Ovary (tissue), 10 donors: ENCODE measurements at regions of chr3 and their contacts with region 1.

Region 1: DNA sequence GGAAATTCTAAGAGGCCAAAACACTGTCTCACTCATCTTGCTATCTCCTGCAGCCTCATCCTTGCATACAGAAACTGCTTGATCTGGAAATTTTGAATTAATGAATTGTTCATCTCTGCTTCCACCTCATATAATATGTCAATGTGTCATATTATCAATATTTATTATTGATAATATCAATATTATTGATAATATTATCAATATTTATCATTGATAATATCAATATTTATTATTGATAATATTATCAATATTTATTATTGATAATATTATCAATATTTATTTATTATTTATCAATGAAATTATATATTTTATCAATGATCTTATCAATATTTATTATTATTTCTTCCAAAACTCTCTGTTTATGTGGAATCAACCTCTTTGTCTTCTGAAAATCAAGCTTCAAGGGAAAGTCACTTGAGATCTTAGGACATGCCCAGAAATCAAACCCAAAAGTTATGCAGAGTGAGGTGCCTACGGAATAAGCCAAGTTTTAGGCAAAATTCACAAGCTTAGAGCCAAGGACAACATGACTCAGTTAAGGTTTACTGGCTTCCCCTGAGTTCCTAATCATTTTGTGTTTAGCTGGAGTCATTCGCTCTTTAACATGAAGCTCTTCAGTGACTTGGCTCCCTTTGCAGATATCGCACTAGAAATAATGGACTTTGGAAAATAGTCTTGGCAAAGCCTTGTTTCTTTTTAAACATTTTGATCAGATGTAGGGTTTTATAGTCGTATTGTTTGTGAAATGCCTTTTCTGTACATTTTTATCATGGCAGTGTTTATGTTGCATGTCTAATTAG is 297.1 kb upstream of the RARB start:
- DNase-seq: no peak
- H3K4me3 ChIP-seq: no peak overlapping the region
- H3K27ac ChIP-seq: no peak overlapping the region
- H3K4me1 ChIP-seq: no peaks in the 10 kb centered on the region
- H3K27me3 ChIP-seq: no peaks in the 10 kb centered on the region
- CTCF ChIP-seq: no peak
- EP300 ChIP-seq: no peak
- POLR2A ChIP-seq: no peak

Region 2: GRCh38 chr3:23304424-23304823 is 1826.5 kb before region 1 on chr3:
- intact Hi-C with region 1: loop called in 1 of 4 experiments (anchors 5 kb)
- DNase-seq: no peak
- H3K4me3 ChIP-seq: no peak overlapping the region
- H3K27ac ChIP-seq: no peak overlapping the region
- H3K4me1 ChIP-seq: peaks cover 1% of the 10 kb centered on the region
- H3K27me3 ChIP-seq: no peaks in the 10 kb centered on the region
- CTCF ChIP-seq: no peak
- EP300 ChIP-seq: no peak
- POLR2A ChIP-seq: no peak

Region 3: DNA sequence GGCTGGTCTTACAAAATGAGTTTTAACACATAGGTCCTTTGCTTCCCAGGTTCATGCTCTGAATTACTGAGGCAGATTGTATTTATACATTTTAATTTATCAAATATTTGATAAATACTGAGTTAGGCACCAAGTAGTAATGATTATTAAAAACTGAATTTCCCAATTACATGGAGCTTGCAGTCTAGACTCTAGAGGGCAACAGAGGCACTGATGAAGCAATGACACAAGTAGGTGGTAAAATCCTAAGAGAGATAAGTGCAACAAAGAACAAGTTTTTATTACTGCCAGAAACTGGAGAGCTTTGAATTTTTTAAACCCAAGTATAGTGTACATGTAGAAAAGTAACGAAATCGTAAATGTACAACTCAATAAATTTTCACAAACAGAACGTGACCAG is 109.1 kb before region 1 on chr3:
- intact Hi-C with region 1: no loop called
- DNase-seq: no peak
- H3K4me3 ChIP-seq: no peak overlapping the region
- H3K27ac ChIP-seq: no peak overlapping the region
- H3K4me1 ChIP-seq: no peaks in the 10 kb centered on the region
- H3K27me3 ChIP-seq: no peaks in the 10 kb centered on the region
- CTCF ChIP-seq: peak in 2 of 3 donors; percentile 16 to 23
- EP300 ChIP-seq: no peak
- POLR2A ChIP-seq: no peak

Region 4: DNA sequence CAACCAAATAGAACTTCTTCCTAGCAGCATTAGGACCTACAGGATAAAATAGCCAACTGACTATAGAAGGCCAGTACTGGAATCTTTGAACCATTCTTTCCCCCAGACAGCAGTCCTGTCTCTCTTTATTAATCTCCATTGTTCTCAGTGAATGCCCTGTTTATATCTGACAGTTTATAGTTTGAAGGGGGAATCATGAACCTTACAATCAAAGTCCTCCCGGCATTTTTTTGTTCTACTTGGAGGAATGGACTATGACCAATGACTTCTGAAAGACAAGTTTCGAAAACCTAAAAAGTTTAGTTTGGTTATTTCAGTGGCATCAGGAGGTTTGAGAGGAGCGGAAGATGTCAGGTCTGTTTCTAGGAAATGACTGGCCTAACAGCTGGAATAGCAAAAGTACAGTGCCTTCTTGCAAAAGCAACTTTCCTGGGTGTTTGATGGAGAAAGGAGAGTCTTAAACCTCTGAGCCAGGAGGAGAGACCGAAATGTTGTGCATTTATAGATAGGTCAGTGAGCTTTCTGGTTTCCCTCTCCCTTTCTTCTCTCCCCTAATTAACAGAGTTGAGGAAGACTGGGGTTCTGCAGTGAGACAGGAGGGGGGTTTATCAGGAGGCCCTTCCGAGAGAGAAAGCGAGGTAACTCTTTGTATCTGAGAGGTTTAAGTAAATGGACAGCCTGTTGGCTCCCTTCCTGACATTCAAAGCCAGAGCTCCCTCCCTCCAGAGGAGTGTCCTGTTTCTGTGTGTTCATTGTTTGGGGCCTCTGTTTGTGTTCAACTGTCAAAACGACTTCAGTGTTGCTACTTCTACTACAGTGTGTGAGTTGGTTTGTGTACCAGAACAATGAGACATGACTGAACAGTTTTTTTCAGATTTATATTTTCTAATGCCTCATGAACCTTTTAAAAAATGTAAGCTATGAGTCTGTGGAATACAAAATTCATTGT is 85.9 kb before region 1 on chr3:
- intact Hi-C with region 1: no loop called
- DNase-seq: no peak
- H3K4me3 ChIP-seq: no peak overlapping the region
- H3K27ac ChIP-seq: no peak overlapping the region
- H3K4me1 ChIP-seq: peaks cover 1% of the 10 kb centered on the region
- H3K27me3 ChIP-seq: no peaks in the 10 kb centered on the region
- CTCF ChIP-seq: no peak
- EP300 ChIP-seq: no peak
- POLR2A ChIP-seq: no peak